Heart right ventricle (tissue), 16 donors: ENCODE measurements at regions of chr3 and their contacts with region 1.

Region 1: GRCh38 chr3:146577662-146578061 is 27.5 kb downstream of the PLSCR5 start:
- DNase-seq: peak in 1 of 2 donors; percentile 19
- ATAC-seq: peak in 2 of 8 donors; percentile 51 to 56
- H3K4me3 ChIP-seq: no peak overlapping the region
- H3K27ac ChIP-seq: no peak overlapping the region
- H3K4me1 ChIP-seq: no peaks in the 10 kb centered on the region
- H3K27me3 ChIP-seq: no peaks in the 10 kb centered on the region
- CTCF ChIP-seq: peak in 7 of 9 donors; percentile 35 to 66 (median 58)

Region 2: GRCh38 chr3:145623349-145623748 is 954.3 kb before region 1 on chr3:
- intact Hi-C with region 1: no loop called
- DNase-seq: no peak
- ATAC-seq: no peak
- H3K4me3 ChIP-seq: no peak overlapping the region
- H3K27ac ChIP-seq: no peak overlapping the region
- H3K4me1 ChIP-seq: no peaks in the 10 kb centered on the region
- H3K27me3 ChIP-seq: no peaks in the 10 kb centered on the region
- CTCF ChIP-seq: no peak

Region 3: GRCh38 chr3:146334151-146334550 is 243.5 kb before region 1 on chr3:
- intact Hi-C with region 1: loop called in 9 of 10 experiments (anchors 1 to 10 kb)
- DNase-seq: peak in 1 of 2 donors; percentile 28
- ATAC-seq: peak in 3 of 8 donors; percentile 42 to 53 (median 50)
- H3K4me3 ChIP-seq: no peak overlapping the region
- H3K27ac ChIP-seq: no peak overlapping the region
- H3K4me1 ChIP-seq: peaks cover 0 to 7% (median 0%) of the 10 kb centered on the region in 9 donors
- H3K27me3 ChIP-seq: no peaks in the 10 kb centered on the region
- CTCF ChIP-seq: peak in 7 of 9 donors; percentile 27 to 59 (median 41)

Region 4: GRCh38 chr3:146628671-146629070 is 51.0 kb after region 1 on chr3:
- intact Hi-C with region 1: no loop called
- DNase-seq: no peak
- ATAC-seq: no peak
- H3K4me3 ChIP-seq: no peak overlapping the region
- H3K27ac ChIP-seq: no peak overlapping the region
- H3K4me1 ChIP-seq: peaks cover 0 to 10% (median 0%) of the 10 kb centered on the region in 9 donors
- H3K27me3 ChIP-seq: no peaks in the 10 kb centered on the region
- CTCF ChIP-seq: no peak